MCF 10A (cell line): ENCODE measurements at regions of chr1 and their contacts with region 1.

Region 1: DNA sequence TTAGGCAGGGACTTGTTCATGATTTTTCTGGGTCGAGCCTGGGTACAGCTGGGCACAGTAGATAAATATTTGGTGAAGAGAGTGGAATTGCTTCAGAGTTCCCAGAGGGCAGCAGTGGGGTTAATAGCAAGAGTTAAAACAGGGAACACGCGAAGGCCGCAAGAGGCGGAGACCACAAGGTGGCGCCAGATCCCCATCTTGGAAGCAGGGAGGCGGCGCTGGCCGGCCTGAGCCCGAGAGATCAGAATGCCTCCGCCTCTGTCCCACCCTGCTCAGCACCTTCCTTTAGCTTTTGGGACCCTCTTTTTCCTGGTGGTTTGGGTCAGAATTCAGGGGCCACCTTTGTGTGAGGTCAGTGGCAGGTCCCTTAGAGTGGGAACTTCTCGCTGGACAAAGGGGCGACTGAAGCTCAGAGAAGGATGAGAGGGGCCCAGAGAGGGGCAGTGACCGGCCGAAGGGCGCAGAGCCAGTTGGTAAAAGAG is 6.5 kb upstream of the PADI2 start:
- DNase-seq: peak; percentile 84
- H3K4me3 Mint-ChIP-seq: no peak overlapping the region
- H3K27ac Mint-ChIP-seq: peak overlapping the region; percentile 59
- H3K4me1 Mint-ChIP-seq: peaks cover 8% of the 10 kb centered on the region
- H3K27me3 Mint-ChIP-seq: no peaks in the 10 kb centered on the region
- CTCF ChIP-seq: peak; percentile 96

Region 2: GRCh38 chr1:16122916-16123315 is 1002.9 kb before region 1 on chr1:
- CTCF ChIA-PET with region 1: no interaction called
- POLR2A ChIA-PET with region 1: no interaction called
- intact Hi-C with region 1: no loop called
- DNase-seq: peak; percentile 96
- H3K4me3 Mint-ChIP-seq: no peak overlapping the region
- H3K27ac Mint-ChIP-seq: peak overlapping the region; percentile 67
- H3K4me1 Mint-ChIP-seq: peaks cover 32% of the 10 kb centered on the region
- H3K27me3 Mint-ChIP-seq: no peaks in the 10 kb centered on the region
- CTCF ChIP-seq: no peak

Region 3: DNA sequence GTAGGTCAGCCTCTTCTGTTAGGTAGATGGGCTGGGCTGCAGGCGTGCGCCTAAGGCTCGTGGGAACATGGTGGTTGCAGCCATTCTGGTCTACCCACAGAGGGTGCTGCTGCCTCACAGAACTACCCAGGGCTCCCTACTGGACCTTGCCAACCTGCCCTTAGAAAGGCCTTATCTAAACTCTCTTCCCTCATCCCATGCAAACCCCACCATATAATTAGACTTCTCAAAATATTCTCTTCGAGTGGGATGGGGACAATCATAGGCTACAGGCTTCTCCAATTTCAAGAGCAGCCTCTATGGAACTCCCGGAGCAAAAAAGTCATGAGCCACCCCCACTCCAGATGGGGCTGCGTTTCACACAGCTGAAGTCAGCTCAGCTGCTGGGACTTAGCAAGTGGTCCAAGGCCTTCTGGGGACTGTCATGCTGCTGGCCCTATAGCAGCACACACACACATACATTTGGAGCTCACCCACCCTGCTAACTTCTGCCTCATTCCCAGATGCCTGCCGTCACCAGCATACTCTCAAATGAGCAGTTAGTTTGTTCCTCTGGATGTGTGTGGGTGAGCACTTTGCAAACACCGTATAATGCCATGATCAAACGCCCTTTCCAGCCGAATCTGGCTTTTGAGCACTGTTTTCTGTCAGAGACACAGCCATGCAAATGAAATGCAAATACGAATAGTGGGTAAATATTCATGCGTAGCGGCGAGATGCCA is 65.9 kb before region 1 on chr1:
- CTCF ChIA-PET with region 1: interaction called, 15 read pairs
- POLR2A ChIA-PET with region 1: no interaction called
- intact Hi-C with region 1: no loop called
- DNase-seq: peak; percentile 77
- H3K4me3 Mint-ChIP-seq: no peak overlapping the region
- H3K27ac Mint-ChIP-seq: no peak overlapping the region
- H3K4me1 Mint-ChIP-seq: no peaks in the 10 kb centered on the region
- H3K27me3 Mint-ChIP-seq: no peaks in the 10 kb centered on the region
- CTCF ChIP-seq: peak; percentile 85

Region 4: DNA sequence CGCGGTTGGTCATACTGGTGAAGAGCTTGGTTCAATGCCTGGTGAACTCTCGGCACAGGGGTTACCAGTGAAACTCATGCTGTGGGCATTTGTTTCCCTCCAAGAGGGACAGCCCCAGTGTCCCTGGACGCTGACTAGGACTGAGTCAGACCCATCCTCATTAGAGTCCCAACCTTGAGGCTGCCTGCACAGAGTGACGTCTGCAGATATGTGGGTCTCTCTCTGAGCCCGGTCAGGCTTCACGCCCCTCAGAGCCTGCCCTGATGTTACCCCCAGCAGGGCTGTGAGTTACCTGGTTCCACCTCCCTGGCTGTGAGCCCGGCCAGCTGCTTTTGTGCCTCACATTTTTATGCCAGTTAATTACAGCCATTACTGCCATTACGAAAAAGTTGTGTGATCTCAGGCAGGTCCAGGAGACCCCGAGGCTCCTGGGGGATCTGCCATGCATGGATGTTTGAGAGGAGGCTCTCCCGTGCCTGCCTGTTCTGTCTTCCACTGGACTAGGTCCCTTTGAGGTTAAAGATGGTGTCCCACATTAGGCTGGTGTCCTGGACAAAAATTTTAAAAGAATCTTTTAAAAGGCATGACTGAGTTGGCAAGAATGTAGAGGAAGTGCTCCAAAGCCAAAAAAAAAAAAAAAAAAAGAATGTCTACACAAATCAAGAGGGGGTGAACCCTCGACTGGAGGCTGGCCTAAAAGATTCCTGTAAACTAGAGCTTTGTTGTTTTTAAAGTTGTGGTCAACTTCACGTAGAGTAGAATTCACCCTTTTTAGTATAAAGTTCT is 42.5 kb after region 1 on chr1:
- CTCF ChIA-PET with region 1: interaction called, 3 read pairs
- POLR2A ChIA-PET with region 1: interaction called, 3 read pairs
- intact Hi-C with region 1: loop called (anchors 5 kb)
- DNase-seq: peak; percentile 74
- H3K4me3 Mint-ChIP-seq: no peak overlapping the region
- H3K27ac Mint-ChIP-seq: peak overlapping the region; percentile 78
- H3K4me1 Mint-ChIP-seq: peaks cover 42% of the 10 kb centered on the region
- H3K27me3 Mint-ChIP-seq: no peaks in the 10 kb centered on the region
- CTCF ChIP-seq: no peak

Region 5: GRCh38 chr1:17244816-17245740 is 119.3 kb after region 1 on chr1:
- CTCF ChIA-PET with region 1: interaction called, 168 read pairs
- POLR2A ChIA-PET with region 1: interaction called, 3 read pairs
- intact Hi-C with region 1: no loop called
- DNase-seq: peak; percentile 60
- H3K4me3 Mint-ChIP-seq: no peak overlapping the region
- H3K27ac Mint-ChIP-seq: no peak overlapping the region
- H3K4me1 Mint-ChIP-seq: peaks cover 13% of the 10 kb centered on the region
- H3K27me3 Mint-ChIP-seq: no peaks in the 10 kb centered on the region
- CTCF ChIP-seq: no peak

Region 6: DNA sequence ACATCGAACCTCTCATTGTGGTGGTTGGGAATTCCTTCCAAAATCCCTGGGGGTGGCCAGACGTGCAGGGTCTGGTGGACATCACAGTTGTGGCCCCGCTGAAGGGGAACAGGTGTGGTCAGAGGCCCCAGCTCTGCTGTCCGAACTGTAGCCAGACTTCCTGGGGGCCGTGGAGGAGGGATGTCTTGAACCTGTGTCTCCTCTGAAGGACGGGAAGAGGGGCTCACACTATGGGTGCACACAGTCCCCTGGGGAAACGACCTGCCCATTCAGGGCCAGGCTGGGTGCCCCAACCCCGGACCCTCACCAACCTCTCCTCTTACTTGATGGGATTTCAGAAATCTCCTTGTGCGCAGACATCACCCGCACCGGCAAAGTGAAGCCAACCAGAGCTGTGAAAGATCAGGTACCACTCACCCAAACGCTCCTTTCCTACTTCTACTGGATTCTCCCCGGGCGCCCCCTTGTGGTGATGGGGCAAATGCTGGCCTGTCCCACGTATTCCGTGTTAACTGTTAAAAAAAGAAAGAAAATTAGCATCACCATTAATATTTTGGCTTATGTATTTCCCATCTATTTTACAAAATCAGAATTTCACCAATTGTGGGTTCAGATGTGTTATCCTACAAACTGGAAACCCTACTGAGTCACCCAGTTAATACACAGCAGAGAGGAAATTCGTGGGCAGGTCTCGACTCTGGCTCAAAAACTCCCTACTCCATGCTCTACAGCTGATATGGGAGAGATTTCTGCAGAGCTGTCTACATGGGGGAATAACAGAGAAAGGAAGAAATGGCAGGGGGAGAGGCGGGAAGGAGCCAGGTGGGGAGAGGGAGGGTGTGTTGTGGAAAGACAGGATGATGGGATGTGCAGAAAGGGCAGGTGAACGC is 210.3 kb after region 1 on chr1:
- CTCF ChIA-PET with region 1: interaction called, 9 read pairs
- POLR2A ChIA-PET with region 1: no interaction called
- intact Hi-C with region 1: loop called (anchors 1 kb)
- DNase-seq: peak; percentile 88
- H3K4me3 Mint-ChIP-seq: no peak overlapping the region
- H3K27ac Mint-ChIP-seq: no peak overlapping the region
- H3K4me1 Mint-ChIP-seq: peaks cover 17% of the 10 kb centered on the region
- H3K27me3 Mint-ChIP-seq: no peaks in the 10 kb centered on the region
- CTCF ChIP-seq: peak; percentile 81

Region 7: DNA sequence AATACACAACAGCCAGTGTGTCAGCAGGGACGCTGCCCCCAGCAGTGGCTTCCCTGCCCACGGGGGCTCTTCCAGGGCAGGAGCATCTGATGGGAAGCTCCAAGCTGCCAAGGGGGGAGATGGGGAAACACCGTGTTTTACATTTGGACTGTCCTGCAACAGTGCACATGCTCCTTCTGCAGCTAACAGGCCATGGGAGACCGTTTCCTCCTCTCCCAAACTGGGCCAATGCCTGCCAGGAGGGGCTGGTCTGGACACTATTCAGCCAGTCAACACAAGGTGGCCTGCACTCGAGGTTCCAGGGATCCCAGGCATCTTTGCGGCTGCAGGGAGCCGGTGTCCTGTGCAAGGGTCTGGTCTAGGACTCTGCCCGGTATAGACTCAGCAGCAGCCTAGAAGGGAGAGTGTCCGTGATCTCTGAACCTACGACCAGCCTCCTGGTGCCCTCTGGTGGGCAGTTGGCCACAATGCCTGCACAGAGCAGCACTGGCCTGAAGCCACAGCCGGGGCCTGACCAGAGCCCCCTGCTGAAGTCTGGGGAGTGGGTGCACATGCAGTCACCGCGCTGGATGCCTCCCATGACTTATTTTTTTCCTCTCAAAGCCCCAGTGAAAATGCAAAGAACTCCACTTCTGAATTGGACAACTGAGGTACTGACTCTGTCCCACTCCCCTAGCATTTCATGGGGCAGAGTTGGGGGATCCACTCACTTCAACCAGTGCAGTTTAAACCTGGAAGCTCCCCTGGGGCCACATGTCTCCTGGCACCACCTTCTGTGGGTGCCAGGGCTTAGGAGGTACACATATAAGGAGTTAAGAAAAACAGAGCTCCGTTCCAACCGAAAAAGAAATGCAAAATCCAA is 280.3 kb after region 1 on chr1:
- CTCF ChIA-PET with region 1: interaction called, 31 read pairs
- POLR2A ChIA-PET with region 1: interaction called, 5 read pairs
- intact Hi-C with region 1: no loop called
- DNase-seq: peak; percentile 61
- H3K4me3 Mint-ChIP-seq: no peak overlapping the region
- H3K27ac Mint-ChIP-seq: no peak overlapping the region
- H3K4me1 Mint-ChIP-seq: peaks cover 10% of the 10 kb centered on the region
- H3K27me3 Mint-ChIP-seq: no peaks in the 10 kb centered on the region
- CTCF ChIP-seq: peak; percentile 82